H1 (cell line): ENCODE measurements at regions of chr4 and their contacts with region 1.

Region 1: GRCh38 chr4:5998333-5998936 is 19.8 kb downstream of the C4orf50 start:
- DNase-seq: peak; percentile 38 to 79
- H3K4me3 ChIP-seq: no peak overlapping the region
- H3K27ac ChIP-seq: no peak overlapping the region
- H3K4me1 ChIP-seq: no peaks in the 10 kb centered on the region
- H3K27me3 ChIP-seq: 0 out of 7 replicates have a peak, but pooled peaks cover 0 to 1% (median 0%) of the 10 kb centered on the region in 4 experiments
- CTCF ChIP-seq: peak in 2 of 3 experiments; percentile 93 to 97; a peak in 3 of 4 replicates
- EP300 ChIP-seq: no peak
- POLR2A ChIP-seq: no peak
- RAD21 ChIP-seq: peak; percentile 98 to 99

Region 2: GRCh38 chr4:5683566-5683965 is 314.9 kb before region 1 on chr4:
- CTCF ChIA-PET with region 1: no interaction called
- POLR2A ChIA-PET with region 1: no interaction called
- DNase-seq: no peak
- H3K4me3 ChIP-seq: no peak overlapping the region
- H3K27ac ChIP-seq: no peak overlapping the region
- H3K4me1 ChIP-seq: no peaks in the 10 kb centered on the region; a peak in 1 of 7 replicates
- H3K27me3 ChIP-seq: no peaks in the 10 kb centered on the region
- CTCF ChIP-seq: no peak
- EP300 ChIP-seq: no peak
- POLR2A ChIP-seq: no peak
- RAD21 ChIP-seq: no peak

Region 3: DNA sequence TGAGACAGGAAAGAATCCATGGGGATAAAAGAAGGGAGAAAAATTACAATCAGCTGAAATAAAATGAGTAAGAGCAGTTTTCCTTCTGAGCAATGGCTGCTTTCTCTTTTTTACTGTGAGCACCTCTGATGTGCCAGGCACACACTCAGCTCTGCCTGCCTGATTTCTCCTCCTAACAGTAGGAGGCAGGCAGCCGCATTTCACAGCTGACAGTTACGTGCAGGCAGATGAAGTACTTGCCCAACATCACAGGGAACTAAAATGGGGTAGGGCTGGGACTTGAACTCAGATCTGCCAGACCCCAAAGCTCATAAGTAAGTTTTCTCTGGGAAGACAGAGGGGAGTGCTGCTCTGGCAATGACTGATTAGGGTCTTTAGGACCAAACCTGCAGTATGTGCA is 34.8 kb before region 1 on chr4:
- CTCF ChIA-PET with region 1: interaction called, 11 read pairs
- POLR2A ChIA-PET with region 1: no interaction called
- DNase-seq: no peak
- H3K4me3 ChIP-seq: no peak overlapping the region
- H3K27ac ChIP-seq: no peak overlapping the region
- H3K4me1 ChIP-seq: peaks cover 0 to 3% (median 0%) of the 10 kb centered on the region in 4 experiments; a peak in 1 of 7 replicates
- H3K27me3 ChIP-seq: no peaks in the 10 kb centered on the region; a peak in 1 of 7 replicates
- CTCF ChIP-seq: peak in 1 of 3 experiments; percentile 34; a peak in 1 of 4 replicates
- EP300 ChIP-seq: no peak
- POLR2A ChIP-seq: no peak
- RAD21 ChIP-seq: peak; percentile 5 to 33; a peak in 1 of 4 replicates

Region 4: DNA sequence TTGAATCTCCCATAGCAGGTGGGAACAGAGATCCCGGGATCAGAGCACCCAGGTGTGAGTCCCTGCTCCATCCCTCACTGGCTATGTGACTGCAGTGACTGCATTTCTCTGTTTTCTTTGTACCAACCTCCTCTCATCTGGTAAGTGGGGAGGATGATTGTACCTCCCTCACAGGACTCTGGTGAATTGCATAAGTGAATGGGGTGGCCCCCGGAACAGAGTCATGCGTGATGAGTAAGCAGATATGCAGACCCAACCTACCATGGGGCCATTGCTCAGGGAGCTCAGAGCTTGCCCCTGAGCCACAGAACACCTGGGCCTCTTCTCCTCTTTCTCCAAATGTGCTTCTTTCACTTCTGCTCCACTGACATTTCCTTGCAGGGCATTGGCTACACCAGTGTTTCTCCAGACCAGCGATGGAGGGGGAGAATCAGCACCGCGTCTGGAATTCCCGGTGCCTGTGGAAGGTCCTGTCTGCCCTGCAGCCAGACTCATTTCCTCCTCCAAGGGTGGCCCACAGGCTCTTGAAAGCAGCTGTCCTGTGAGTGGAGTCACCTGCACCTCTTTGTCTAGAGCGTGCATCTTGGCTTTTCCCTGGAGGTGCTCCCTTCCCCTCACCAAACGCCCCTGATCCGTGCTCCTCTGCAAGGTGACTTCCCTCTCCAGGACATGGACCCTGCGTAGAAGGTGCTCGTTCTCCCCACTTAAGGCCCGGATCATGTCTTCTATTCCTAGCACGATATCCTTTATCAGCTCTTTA is 10.2 kb before region 1 on chr4:
- CTCF ChIA-PET with region 1: interaction called, 22 read pairs
- POLR2A ChIA-PET with region 1: no interaction called
- DNase-seq: no peak
- H3K4me3 ChIP-seq: no peak overlapping the region
- H3K27ac ChIP-seq: no peak overlapping the region
- H3K4me1 ChIP-seq: no peaks in the 10 kb centered on the region; a peak in 2 of 7 replicates
- H3K27me3 ChIP-seq: no peaks in the 10 kb centered on the region; a peak in 1 of 7 replicates
- CTCF ChIP-seq: no peak
- EP300 ChIP-seq: no peak
- POLR2A ChIP-seq: no peak
- RAD21 ChIP-seq: no peak

Region 5: DNA sequence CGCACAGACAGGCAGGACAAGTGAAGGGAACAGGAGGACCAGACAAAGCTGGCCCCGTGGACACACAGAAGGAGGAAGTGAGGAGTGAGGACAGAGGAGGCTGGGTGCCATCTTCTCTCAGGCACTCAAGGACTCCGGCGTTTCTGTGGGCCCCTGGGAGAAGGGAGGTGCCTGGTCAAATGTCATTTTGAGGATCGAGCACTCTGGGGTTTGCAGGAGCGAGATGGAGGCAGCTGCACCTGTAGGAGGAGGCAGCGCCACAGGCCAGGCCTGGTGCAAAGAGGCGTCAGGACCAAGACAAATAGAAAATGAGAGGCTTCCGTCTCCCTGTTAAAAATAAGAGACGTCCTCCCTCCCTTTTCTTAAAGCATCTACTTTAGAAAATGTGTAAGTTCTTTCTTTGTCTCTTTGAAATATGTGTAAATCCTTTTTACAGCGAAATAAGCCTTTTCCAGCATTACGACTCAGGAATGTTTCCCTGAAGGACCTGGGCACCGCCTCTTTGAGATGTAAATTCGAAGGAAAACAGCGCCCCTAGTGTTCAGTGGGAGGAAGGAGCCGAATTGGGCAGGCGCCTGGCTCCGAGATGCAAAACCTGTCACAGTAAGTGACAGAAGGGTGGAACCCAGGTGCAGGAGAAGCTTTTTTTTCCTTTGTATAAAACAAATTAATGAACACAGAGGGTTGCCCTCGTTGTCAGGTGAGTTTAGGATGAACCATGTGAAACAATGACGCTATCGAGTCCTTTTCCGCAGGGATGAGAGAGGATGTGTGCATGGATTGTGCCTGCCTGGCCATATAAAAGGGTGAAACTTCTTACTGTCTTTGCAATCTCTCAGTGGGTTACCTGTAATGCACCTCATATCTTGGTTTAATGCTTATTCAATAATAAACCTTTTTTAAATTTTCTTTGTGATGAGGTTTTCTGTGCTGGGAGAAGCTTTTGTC is 21.2 kb after region 1 on chr4:
- CTCF ChIA-PET with region 1: interaction called, 74 read pairs
- POLR2A ChIA-PET with region 1: no interaction called
- DNase-seq: peak in 1 of 2 experiments; percentile 79
- H3K4me3 ChIP-seq: peak overlapping the region in 1 of 4 experiments; percentile 16; a peak in 1 of 8 replicates
- H3K27ac ChIP-seq: no peak overlapping the region
- H3K4me1 ChIP-seq: peaks cover 0 to 8% (median 5%) of the 10 kb centered on the region in 4 experiments; a peak in 6 of 7 replicates
- H3K27me3 ChIP-seq: no peaks in the 10 kb centered on the region
- CTCF ChIP-seq: peak in 2 of 3 experiments; percentile 79 to 87; a peak in 3 of 4 replicates
- EP300 ChIP-seq: no peak
- POLR2A ChIP-seq: no peak
- RAD21 ChIP-seq: peak; percentile 27 to 40; a peak in 3 of 4 replicates

Region 6: GRCh38 chr4:6058531-6059374 is 60.3 kb after region 1 on chr4:
- CTCF ChIA-PET with region 1: interaction called, 17 read pairs
- POLR2A ChIA-PET with region 1: no interaction called
- DNase-seq: no peak
- H3K4me3 ChIP-seq: no peak overlapping the region
- H3K27ac ChIP-seq: no peak overlapping the region
- H3K4me1 ChIP-seq: no peaks in the 10 kb centered on the region
- H3K27me3 ChIP-seq: no peaks in the 10 kb centered on the region; a peak in 2 of 7 replicates
- CTCF ChIP-seq: no peak
- EP300 ChIP-seq: no peak
- POLR2A ChIP-seq: no peak
- RAD21 ChIP-seq: no peak

Region 7: DNA sequence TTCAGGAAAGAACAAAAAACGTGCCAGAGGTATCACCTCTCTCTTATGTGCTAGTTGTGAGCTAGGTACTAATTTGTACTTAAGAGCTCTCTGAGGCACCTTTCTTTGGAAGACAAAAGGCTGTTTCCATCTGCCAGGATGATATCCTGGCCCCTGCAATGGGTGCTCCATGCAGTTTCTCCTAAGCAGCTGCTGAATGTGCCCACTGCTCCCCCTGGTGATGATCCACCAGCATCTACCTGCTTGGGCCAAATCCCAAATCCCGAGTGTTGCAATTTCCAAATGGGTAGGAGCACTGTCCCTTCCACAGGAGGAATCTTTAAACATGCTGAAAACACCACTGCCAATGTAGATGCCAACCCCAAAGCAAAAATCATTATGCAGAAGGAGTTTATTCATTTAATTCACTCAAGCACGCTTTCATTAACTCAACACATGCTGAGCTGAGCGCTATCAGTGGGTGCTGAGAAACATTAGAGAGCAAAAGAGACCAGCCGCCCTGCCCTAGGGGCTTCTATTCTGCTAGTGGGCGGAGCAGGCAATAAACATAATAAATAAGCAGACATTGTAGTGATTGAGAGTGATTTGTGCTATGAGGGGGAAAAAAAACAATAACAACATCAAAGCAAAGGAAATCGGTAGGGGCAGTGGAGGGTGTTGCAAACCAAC is 89.4 kb after region 1 on chr4:
- CTCF ChIA-PET with region 1: interaction called, 111 read pairs
- POLR2A ChIA-PET with region 1: interaction called, 4 read pairs
- DNase-seq: peak; percentile 59 to 75
- H3K4me3 ChIP-seq: no peak overlapping the region
- H3K27ac ChIP-seq: no peak overlapping the region
- H3K4me1 ChIP-seq: peaks cover 0 to 8% (median 4%) of the 10 kb centered on the region in 4 experiments; a peak in 4 of 7 replicates
- H3K27me3 ChIP-seq: 0 out of 7 replicates have a peak, but pooled peaks cover 0 to 3% (median 0%) of the 10 kb centered on the region in 4 experiments
- CTCF ChIP-seq: peak; percentile 86 to 88 (median 88)
- EP300 ChIP-seq: no peak
- POLR2A ChIP-seq: no peak
- RAD21 ChIP-seq: peak; percentile 82 to 87

Region 8: DNA sequence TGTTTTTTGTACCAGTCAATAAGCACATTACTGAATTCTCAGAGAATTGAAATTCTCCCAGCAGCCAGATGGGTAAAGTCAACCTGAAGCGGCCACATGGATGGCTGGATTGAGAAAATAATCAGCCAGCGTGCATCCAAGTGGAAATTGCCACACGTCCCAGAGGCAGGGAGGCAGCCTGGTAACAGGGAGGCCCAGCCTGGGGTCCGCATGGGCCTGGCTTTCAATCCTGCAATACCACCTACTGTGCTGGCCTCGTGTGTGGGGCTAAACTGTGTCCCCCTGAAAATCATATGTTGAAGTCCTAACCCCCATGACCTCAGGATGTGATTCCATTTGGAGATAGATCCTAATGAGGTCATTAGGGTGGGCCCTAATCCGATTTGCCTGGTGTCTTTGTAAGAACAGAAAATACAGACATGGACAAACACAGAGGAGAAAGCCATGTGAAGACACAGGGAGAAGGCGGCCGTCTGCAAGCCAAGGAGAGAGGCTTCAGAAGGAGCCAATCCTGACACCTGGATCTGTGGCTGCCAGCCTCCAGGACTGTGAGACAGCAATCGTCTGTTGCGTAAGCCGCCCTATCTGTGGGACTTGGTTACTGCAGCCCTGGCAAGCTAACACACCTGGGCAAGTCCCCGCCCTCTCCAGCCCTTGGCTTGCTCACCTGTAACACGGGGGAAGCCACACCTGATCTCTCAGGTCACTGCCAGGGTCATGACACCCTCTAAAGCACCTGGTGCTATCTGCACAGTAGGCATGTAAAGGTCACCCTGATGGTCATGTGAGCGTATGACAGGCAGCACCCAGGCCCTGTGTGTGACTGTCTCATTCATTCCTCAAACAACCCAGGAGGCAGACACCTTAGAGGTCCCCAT is 111.6 kb after region 1 on chr4:
- CTCF ChIA-PET with region 1: interaction called, 22 read pairs
- POLR2A ChIA-PET with region 1: no interaction called
- DNase-seq: peak; percentile 62 to 82
- H3K4me3 ChIP-seq: no peak overlapping the region
- H3K27ac ChIP-seq: no peak overlapping the region
- H3K4me1 ChIP-seq: peaks cover 1 to 14% (median 6%) of the 10 kb centered on the region in 4 experiments
- H3K27me3 ChIP-seq: no peaks in the 10 kb centered on the region; a peak in 1 of 7 replicates
- CTCF ChIP-seq: peak in 2 of 3 experiments; percentile 79 to 92; a peak in 3 of 4 replicates
- EP300 ChIP-seq: no peak
- POLR2A ChIP-seq: no peak
- RAD21 ChIP-seq: peak; percentile 48 to 65